ENCODE measurements at regions of chr3 and their contacts with region 1.

Region 1: GRCh38 chr3:31575448-31575847 is 42.7 kb downstream of the STT3B start:
- DNase-seq: peak in 4 of 9 donors; percentile 9 to 27 (median 12)
- ATAC-seq: peak; percentile 66
- H3K4me3 ChIP-seq: no peak overlapping the region
- H3K4me3 Mint-ChIP-seq: peak overlapping the region in 7 of 10 donors; percentile 1 to 62 (median 48)
- H3K27ac ChIP-seq: peak overlapping the region; percentile 1
- H3K27ac Mint-ChIP-seq: peak overlapping the region in 8 of 9 donors; percentile 0 to 80 (median 34)
- H3K4me1 ChIP-seq: peaks cover 28 to 34% of the 10 kb centered on the region in 2 donors
- H3K4me1 Mint-ChIP-seq: peaks cover 12 to 50% (median 22%) of the 10 kb centered on the region in 7 donors
- H3K27me3 ChIP-seq: no peaks in the 10 kb centered on the region
- H3K27me3 Mint-ChIP-seq: no peaks in the 10 kb centered on the region

Region 2: GRCh38 chr3:31592764-31593163 is 17.3 kb after region 1 on chr3:
- CTCF ChIA-PET with region 1: interaction called, 3 read pairs
- POLR2A ChIA-PET with region 1: no interaction called
- intact Hi-C with region 1: loop called in 1 of 2 experiments (anchors 2 kb)
- DNase-seq: no peak
- ATAC-seq: no peak
- H3K4me3 ChIP-seq: no peak overlapping the region
- H3K4me3 Mint-ChIP-seq: peak overlapping the region in 5 of 10 donors; percentile 40 to 67 (median 50)
- H3K27ac ChIP-seq: no peak overlapping the region
- H3K27ac Mint-ChIP-seq: peak overlapping the region in 1 of 9 donors; percentile 67
- H3K4me1 ChIP-seq: peaks cover 0 to 4% of the 10 kb centered on the region in 2 donors
- H3K4me1 Mint-ChIP-seq: peaks cover 34 to 70% (median 52%) of the 10 kb centered on the region in 7 donors
- H3K27me3 ChIP-seq: no peaks in the 10 kb centered on the region
- H3K27me3 Mint-ChIP-seq: no peaks in the 10 kb centered on the region

Region 3: DNA sequence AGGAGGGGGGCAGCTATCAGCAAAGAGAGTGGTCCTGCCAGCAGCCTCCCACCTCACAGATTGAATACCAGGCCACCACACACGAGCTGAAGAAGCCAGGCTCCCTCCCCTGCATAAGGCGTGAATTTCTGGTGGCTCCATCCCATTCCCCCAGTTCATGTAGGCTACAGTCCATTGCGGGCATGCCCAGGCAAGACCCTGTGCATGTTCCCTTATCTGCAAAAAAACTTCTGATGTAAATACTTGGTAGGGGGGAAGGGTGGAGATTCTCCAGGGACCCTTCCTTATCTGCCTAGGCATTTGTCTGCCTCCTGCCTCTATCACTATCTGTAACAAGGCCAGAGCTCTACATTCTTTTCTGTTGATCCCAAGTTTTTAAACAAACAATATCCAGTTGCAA is 1892.3 kb after region 1 on chr3:
- CTCF ChIA-PET with region 1: no interaction called
- POLR2A ChIA-PET with region 1: no interaction called
- intact Hi-C with region 1: no loop called
- DNase-seq: no peak
- ATAC-seq: no peak
- H3K4me3 ChIP-seq: no peak overlapping the region
- H3K4me3 Mint-ChIP-seq: no peak overlapping the region
- H3K27ac ChIP-seq: no peak overlapping the region
- H3K27ac Mint-ChIP-seq: no peak overlapping the region
- H3K4me1 ChIP-seq: no peaks in the 10 kb centered on the region
- H3K4me1 Mint-ChIP-seq: peaks cover 0 to 1% (median 0%) of the 10 kb centered on the region in 7 donors
- H3K27me3 ChIP-seq: no peaks in the 10 kb centered on the region
- H3K27me3 Mint-ChIP-seq: no peaks in the 10 kb centered on the region